ENCODE measurements at regions of chrX and their contacts with region 1.

Region 1: GRCh38 chrX:111869639-111870034 is 6.3 kb upstream of the TRPC5OS start:
- ATAC-seq: peak; percentile 71 to 94 (median 80)
- H3K4me3 ChIP-seq: no peak overlapping the region
- H3K27ac ChIP-seq: no peak overlapping the region
- H3K4me1 ChIP-seq: peaks cover 0 to 3% of the 10 kb centered on the region in 2 donors

Region 2: DNA sequence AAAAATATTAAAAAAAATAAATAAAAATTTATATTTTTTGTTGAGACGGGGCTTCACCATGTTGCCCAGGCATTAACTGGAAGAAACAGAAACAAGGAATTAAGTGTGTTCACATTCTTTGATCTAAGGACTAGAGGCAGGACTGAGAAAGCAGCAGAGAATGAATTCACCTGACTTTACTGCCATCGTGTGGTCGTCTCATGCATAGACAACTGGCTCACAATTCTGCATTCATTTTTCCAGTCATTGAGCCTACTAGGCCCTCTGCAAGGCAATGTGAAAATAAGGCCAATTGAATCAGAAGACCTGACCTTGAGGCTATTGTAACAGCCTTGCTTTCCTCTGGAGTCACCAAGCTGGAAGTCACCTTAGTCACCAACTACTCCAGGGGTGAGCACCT is 772.7 kb after region 1 on chrX:
- in situ Hi-C with region 1: loop called in 1 of 9 experiments (anchors 25 kb)
- ATAC-seq: peak; percentile 50 to 84 (median 72)
- H3K4me3 ChIP-seq: no peak overlapping the region
- H3K27ac ChIP-seq: no peak overlapping the region
- H3K4me1 ChIP-seq: no peaks in the 10 kb centered on the region

Measured in motor neuron (in vitro differentiated cells).